Posterior vena cava (tissue), 2 donors: ENCODE measurements at regions of chr1 and their contacts with region 1.

Region 1: GRCh38 chr1:34924759-34925555 is 4.5 kb downstream of the DLGAP3 start:
- DNase-seq: peak; percentile 93

Region 2: DNA sequence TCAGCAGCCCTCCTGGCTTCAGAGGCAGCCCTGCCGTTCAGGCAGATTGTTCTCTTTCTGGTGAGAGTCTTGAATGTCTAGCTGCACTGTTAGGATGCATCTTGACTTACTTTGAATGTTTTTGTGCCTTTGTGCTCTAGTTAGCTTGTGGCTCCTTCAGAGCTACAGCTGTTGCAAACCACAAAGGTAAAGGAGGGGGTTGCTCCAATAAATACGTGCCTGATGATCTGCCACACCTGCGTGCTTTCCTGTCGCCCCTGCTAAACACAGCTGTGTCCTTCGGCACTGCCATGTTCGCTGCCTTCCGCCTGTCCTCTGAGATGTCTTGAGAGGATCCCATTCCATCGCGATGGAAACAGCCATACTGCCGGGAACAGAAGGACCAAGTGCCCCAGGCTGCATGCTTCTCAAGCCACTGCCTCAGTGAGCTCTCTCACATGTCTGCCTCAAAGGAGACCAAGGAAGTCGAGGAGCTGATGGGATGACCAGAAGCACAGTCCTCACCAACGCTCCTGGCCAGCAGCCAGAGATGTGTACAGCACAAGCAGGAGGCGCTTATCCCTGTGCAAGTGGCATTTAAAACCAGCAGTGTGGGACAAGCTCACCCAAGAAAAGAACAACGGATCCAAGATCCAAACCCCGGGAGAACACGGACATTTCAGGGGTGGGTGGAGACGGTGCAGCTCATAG is 53.4 kb before region 1 on chr1:
- intact Hi-C with region 1: loop called in 1 of 2 experiments (anchors 1 kb)
- DNase-seq: no peak

Region 3: GRCh38 chr1:35592991-35593694 is 668.2 kb after region 1 on chr1:
- intact Hi-C with region 1: no loop called
- DNase-seq: no peak